Activated CD8-positive, alpha-beta T cell treated with anti-CD3 and anti-CD28 coated beads for 36 hours (primary cell): ENCODE measurements at regions of chr1 and their contacts with region 1.

Region 1: DNA sequence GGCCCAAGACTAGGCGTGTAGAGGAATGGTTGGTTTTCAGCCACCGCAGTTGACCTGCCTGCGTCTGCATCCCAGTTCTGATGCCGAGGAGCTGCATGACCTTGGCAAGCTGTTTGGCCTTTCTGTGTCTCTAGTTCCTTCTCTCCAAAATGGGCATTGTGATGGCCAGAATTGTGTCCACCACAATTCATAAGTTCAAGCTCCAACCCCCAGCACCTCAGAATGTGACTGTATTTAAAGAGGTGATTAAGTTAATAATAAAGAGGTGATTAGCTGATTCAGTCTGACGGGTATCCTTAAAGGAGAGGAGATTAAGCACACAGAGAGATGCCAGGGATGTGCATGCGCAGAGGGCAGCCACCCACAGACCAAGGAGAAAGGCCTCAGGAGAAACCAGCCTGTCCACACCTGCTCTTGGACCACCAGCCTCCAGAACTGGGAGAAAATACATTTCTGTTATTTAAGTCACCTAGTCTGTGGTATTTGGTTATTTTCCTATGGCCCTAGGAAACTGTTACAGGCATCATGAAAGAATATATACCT is 28.5 kb downstream of the MAB21L3 start:
- DNase-seq: no peak
- ATAC-seq: no peak
- H3K4me3 Mint-ChIP-seq: no peak overlapping the region
- H3K27ac Mint-ChIP-seq: no peak overlapping the region
- H3K4me1 Mint-ChIP-seq: peaks cover 6% of the 10 kb centered on the region
- H3K27me3 Mint-ChIP-seq: peaks cover 2% of the 10 kb centered on the region
- CTCF ChIP-seq: no peak

Region 2: GRCh38 chr1:116151739-116152576 is 12.3 kb after region 1 on chr1:
- CTCF ChIA-PET with region 1: interaction called, 67 read pairs
- POLR2A ChIA-PET with region 1: interaction called, 5 read pairs
- intact Hi-C with region 1: no loop called
- DNase-seq: peak; percentile 85
- ATAC-seq: peak; percentile 97
- H3K4me3 Mint-ChIP-seq: peak overlapping the region; percentile 62
- H3K27ac Mint-ChIP-seq: peak overlapping the region; percentile 65
- H3K4me1 Mint-ChIP-seq: peaks cover 22% of the 10 kb centered on the region
- H3K27me3 Mint-ChIP-seq: no peaks in the 10 kb centered on the region
- CTCF ChIP-seq: peak; percentile 91

Region 3: DNA sequence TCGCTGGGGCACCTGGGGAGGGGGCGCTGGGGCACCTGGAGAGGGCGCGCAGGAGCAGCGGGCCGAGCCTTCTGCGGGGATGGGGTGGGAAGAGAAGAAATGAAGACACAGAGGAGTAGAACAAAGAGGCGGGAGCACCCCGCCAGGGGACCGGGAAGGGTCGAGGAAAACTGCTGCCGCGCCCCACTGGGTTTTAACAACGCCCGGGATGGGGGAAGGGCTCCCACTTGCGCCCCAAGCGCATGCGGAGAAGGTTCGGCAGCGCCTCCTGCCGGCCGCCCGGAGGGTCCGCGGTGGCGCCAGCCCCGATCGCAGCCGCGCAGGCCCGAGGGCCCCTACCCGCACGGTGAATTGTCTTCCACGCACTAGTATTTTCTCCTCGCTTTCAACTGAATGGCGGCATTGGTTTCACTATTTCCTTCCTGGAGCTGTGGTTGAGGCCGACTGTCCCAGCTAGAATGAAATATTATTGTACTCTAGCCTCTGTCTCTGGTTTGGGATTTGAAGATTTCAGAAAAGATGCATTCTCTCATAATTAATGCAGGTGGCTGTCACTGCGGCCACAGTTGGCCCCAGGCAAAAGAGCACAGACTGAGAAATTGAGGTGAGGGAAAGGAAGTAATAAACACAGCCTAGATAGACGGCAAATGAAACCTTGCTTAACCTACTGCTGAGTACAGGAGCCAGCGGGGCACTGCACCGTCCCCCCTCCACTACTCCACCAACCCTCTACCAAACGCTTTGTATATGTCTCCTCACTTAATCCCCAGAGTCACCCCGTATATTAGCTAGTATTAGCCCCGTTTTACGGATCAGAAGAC is 28.8 kb after region 1 on chr1:
- CTCF ChIA-PET with region 1: interaction called, 49 read pairs
- POLR2A ChIA-PET with region 1: no interaction called
- intact Hi-C with region 1: no loop called
- DNase-seq: peak; percentile 89
- ATAC-seq: peak; percentile 99
- H3K4me3 Mint-ChIP-seq: peak overlapping the region; percentile 67
- H3K27ac Mint-ChIP-seq: peak overlapping the region; percentile 74
- H3K4me1 Mint-ChIP-seq: peaks cover 9% of the 10 kb centered on the region
- H3K27me3 Mint-ChIP-seq: no peaks in the 10 kb centered on the region
- CTCF ChIP-seq: peak; percentile 95

Region 4: GRCh38 chr1:116360429-116361173 is 220.9 kb after region 1 on chr1:
- CTCF ChIA-PET with region 1: interaction called, 16 read pairs
- POLR2A ChIA-PET with region 1: no interaction called
- intact Hi-C with region 1: no loop called
- DNase-seq: no peak
- ATAC-seq: no peak
- H3K4me3 Mint-ChIP-seq: no peak overlapping the region
- H3K27ac Mint-ChIP-seq: no peak overlapping the region
- H3K4me1 Mint-ChIP-seq: peaks cover 9% of the 10 kb centered on the region
- H3K27me3 Mint-ChIP-seq: no peaks in the 10 kb centered on the region
- CTCF ChIP-seq: peak; percentile 50

Region 5: DNA sequence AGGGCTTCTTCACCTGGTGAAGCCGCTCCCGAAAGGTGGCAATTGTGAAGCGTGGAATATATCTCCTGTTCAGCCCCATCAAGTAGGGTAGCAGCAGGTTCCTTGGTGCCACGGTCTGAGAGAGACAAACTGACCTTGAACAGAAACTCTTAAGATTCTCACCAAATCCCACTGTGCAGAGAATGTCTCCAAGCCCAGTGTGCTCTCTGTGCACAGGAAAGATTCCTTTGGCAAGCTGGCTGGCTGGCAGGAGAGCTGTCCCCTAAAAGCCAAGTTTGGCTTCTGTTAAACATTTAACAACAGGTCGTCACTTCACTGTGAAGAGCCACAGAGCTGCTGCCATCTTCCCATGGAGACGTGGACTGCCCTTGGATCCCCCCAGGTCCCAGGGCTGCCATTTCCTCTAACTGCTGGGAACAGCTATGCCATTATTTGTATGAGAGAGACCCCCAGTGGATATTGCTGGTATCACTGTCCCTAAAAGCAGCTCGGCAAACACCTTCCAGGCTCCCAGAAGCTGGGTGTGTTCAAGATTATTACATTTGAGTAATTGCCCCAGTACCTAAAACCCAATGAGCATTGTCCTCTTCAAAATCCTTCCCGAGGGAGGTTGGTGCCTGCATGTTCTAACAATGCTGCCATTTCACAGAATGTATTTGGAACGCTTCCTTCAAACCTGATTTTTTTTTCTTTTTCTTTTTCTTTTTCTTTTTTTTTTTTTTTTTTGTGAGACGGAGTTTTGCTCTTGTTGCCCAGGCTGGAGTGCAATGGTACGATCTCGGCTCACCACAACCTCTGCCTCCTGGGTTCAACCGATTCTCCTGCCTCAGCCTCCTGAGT is 359.3 kb after region 1 on chr1:
- CTCF ChIA-PET with region 1: interaction called, 460 read pairs
- POLR2A ChIA-PET with region 1: interaction called, 4 read pairs
- intact Hi-C with region 1: no loop called
- DNase-seq: peak; percentile 67
- ATAC-seq: peak; percentile 78
- H3K4me3 Mint-ChIP-seq: no peak overlapping the region
- H3K27ac Mint-ChIP-seq: no peak overlapping the region
- H3K4me1 Mint-ChIP-seq: peaks cover 23% of the 10 kb centered on the region
- H3K27me3 Mint-ChIP-seq: no peaks in the 10 kb centered on the region
- CTCF ChIP-seq: peak; percentile 88